ENCODE measurements at regions of chr14 and their contacts with region 1.

Region 1: DNA sequence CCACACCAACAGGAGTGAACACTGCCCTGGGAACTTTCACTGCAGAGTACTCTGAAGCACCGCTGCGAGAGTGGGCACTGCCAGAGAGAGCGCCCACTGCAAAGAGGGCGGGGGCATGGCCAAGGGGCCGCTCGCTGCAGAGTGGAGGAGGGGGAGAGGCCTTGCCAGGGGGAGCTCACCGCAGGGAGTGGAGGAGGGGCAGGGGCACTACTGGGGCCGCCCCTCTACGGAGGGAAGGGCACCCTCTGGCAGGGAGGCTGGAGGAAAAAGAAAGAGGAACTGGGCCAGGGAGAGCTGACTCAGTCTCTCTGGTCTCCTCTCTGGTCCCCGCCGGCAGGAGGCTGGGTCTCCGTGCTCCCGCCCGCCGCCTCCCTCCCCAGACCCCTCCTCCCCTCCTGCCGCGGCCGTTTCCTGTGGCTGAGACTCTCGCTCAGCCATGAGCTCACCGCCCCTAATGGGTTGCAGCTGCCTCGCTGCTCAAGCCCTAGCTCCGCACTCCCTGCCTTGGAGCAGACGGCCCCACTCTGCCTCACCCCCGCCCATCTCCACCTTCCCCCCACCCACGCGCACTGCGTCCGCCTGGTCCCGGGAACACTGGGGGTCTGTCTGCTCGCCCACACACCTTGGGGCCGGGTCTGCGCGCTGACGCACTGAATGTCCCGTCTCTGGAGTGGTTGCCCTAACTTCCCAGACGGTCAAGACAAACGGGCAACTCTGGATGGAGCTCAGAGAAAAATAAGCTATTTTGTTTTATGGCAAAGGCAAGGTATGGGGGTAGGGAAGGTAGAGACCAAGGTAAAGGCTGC is 1.3 kb downstream of the ARHGEF40 start:
- DNase-seq: peak; percentile 94

Region 2: DNA sequence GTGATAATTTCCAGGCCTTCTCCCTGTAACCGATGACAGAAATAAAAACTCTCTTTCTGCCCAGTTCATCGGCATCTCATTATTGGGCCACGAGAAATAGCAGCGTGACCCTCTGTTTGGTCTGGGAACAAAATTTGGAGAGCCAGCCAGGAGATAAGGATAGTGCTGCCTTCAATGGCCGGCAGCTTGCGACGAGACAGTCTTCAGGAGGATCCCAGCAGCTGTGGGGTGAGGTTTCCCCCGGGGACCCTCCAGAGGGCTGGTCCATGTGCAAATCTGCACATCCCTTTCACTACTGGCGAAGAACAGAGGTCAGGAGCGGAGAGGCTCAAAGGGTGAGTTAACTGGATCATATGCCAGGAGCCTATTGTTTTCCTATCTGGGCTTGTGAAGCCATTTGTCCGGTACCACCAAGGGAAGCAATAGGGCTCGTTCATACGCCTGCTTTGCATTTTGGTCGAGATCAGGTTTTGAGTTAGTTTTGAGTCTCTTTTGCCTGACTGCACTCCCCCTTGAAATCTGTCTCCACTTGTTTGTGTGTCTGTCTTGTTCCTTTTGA is 67.6 kb before region 1 on chr14:
- intact Hi-C with region 1: no loop called
- DNase-seq: no peak

Region 3: DNA sequence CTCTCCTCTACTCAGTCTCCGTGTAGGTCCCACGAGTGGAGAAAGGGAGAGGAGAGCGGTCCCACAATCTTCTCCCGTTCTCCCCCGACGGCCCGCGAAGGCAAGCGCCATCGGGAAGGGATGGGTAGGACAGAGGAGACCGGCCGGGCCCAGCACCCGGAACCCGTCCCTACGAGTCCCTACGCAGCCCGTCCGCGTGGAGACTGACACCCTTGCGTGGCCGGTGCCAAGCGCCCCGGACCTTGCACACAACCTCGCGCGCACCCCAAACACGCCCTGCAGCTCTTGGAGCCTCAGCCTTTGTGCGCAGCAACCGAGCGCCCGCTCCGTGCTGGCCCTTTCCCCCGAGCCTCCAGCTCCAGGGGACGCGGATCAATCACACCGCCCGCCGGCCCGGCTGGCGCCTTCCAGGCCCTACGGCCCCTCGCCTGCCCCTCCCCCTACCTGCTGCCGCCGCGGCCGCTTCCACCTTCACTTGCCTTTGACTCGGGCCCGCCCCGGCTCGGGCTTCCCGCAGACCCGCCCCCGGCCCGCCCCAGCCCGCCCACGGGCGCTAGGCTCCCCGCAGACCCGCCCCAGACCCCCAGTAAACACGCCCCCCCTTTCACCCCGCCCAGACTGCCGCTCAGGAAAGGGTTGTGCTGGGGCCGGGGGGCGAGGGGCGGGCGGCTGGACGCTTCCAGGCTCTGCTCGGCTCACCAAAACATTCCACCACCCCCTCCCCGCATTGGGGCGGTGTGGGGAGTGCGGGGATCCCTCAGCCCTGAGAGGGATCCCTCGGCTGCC is 46.6 kb before region 1 on chr14 and contains the start of gene NDRG2:
- intact Hi-C with region 1: loop called (anchors 2 kb)
- DNase-seq: peak; percentile 90
- total RNA-seq, gene NDRG2: 304 TPM

Region 4: DNA sequence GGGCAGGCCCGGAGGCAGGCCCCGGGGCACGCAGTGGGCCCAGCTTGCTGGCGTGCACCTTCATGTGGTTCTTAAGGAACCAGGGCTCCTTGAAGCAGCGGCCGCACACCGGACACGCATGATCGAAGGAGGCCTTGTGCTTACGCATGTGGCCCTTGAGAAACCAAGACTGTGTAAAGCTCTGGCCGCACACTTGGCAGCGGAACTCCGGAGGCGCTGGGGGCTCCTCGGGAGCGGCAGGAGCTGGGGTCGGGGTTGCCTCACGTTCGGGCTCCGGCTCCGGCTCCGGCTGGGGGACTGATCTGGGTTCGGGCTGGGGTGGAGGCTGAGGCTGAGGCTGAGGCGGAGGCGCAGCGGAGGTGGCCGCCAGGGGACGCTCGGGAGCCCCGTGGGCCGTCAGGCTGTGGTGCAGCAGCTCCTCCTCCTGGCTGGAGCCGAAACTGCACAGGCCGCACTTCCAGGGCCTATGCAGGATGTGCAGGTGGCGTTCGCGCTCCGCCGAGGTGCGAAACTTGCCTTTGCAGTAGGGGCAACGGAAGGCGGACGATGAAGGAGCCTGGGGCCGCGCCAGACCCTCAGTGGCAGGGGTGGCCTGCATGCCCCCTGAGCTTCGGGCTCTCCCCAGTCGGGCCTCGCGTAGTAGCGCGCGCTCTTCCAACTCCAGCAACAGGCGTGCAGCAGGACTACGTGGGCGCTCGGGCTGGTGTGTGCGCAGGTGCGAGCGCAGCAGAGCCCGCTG is 21.0 kb after region 1 on chr14:
- intact Hi-C with region 1: loop called (anchors 2 kb)
- DNase-seq: peak; percentile 96

Region 5: DNA sequence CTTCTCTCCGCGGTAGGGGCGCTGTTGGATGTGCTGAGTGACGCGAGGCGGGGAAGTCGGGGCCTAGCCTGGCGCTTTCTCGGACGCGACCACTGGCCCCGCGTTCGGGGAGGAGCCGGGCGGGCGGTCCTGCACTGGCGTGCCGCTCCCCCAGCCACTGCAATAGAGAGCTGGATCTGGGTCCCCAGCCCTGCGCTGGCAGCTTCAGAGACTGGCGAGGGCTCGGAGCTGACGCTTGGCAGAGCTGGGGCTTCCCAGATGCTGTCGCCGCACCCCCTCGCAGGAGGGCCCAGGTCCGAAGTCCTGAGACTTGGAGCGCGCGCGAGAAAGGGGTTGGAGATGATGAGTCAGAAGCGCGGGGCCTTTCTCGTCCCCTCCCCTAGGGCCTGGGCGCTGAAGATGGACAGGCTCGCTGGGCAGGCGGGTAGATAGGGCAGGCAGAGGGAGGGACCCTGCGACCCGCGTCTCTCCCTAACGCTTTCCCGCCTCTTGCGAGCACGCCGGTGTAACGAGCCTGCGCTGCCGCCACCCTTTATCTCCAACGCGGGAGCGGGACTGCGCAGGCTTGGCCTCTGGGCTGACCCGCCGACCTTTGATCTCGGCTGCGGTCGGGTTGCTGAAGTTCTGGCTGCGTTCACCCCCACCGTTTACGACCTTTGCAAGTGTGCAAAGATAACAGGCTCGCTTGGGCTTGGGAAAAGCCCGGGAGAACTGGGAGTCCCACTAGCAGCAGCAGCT is 32.5 kb after region 1 on chr14:
- intact Hi-C with region 1: loop called (anchors 1 kb)
- DNase-seq: peak; percentile 97

Region 6: DNA sequence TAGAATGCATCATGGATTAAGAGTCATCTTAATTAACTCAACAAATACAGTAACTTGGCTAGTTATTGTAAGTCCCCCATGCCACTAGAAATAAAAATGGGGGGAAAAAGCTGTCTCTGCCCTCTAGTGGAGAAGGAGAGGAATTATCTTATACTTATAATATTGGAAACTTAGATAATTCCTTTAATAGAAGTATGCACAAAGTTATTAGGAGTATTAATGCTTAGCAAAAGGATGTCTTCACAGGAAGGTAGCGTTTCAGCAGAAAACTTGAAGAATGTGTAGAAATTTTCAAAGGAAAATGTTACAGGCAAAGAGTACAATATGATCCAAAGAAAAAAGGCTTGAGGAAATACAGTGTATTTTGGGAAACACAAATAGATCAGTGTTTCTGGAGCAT is 64.6 kb after region 1 on chr14:
- intact Hi-C with region 1: no loop called
- DNase-seq: no peak